ENCODE measurements at regions of chr1 and their contacts with region 1.

Region 1: GRCh38 chr1:113677250-113678158 is 81.8 kb downstream of the PHTF1 start:
- DNase-seq: peak in 2 of 9 experiments; percentile 44 to 59
- ATAC-seq: peak; percentile 57
- H3K4me3 ChIP-seq: no peak overlapping the region
- H3K4me3 Mint-ChIP-seq: no peak overlapping the region
- H3K27ac ChIP-seq: no peak overlapping the region
- H3K27ac Mint-ChIP-seq: no peak overlapping the region
- H3K4me1 ChIP-seq: no peaks in the 10 kb centered on the region
- H3K4me1 Mint-ChIP-seq: no peaks in the 10 kb centered on the region
- H3K27me3 ChIP-seq: no peaks in the 10 kb centered on the region
- H3K27me3 Mint-ChIP-seq: no peaks in the 10 kb centered on the region
- CTCF ChIP-seq: peak; percentile 70

Region 2: GRCh38 chr1:112803906-112804762 is 873.4 kb before region 1 on chr1:
- CTCF ChIA-PET with region 1: no interaction called
- POLR2A ChIA-PET with region 1: no interaction called
- intact Hi-C with region 1: loop called in 1 of 2 experiments (anchors 10 kb)
- DNase-seq: peak in 7 of 9 experiments; percentile 13 to 60 (median 29)
- ATAC-seq: peak; percentile 56
- H3K4me3 ChIP-seq: no peak overlapping the region
- H3K4me3 Mint-ChIP-seq: no peak overlapping the region
- H3K27ac ChIP-seq: no peak overlapping the region
- H3K27ac Mint-ChIP-seq: no peak overlapping the region
- H3K4me1 ChIP-seq: no peaks in the 10 kb centered on the region
- H3K4me1 Mint-ChIP-seq: no peaks in the 10 kb centered on the region
- H3K27me3 ChIP-seq: no peaks in the 10 kb centered on the region
- H3K27me3 Mint-ChIP-seq: peaks cover 9% of the 10 kb centered on the region
- CTCF ChIP-seq: no peak

Region 3: GRCh38 chr1:112882271-112882744 is 795.2 kb before region 1 on chr1:
- CTCF ChIA-PET with region 1: interaction called, 4 read pairs
- POLR2A ChIA-PET with region 1: no interaction called
- intact Hi-C with region 1: loop called (anchors 2 kb)
- DNase-seq: no peak
- ATAC-seq: no peak
- H3K4me3 ChIP-seq: no peak overlapping the region
- H3K4me3 Mint-ChIP-seq: no peak overlapping the region
- H3K27ac ChIP-seq: no peak overlapping the region
- H3K27ac Mint-ChIP-seq: peak overlapping the region; percentile 37
- H3K4me1 ChIP-seq: no peaks in the 10 kb centered on the region
- H3K4me1 Mint-ChIP-seq: no peaks in the 10 kb centered on the region
- H3K27me3 ChIP-seq: no peaks in the 10 kb centered on the region
- H3K27me3 Mint-ChIP-seq: peaks cover 3% of the 10 kb centered on the region
- CTCF ChIP-seq: no peak

Region 4: GRCh38 chr1:113140588-113141446 is 536.7 kb before region 1 on chr1:
- CTCF ChIA-PET with region 1: interaction called, 8 read pairs
- POLR2A ChIA-PET with region 1: no interaction called
- intact Hi-C with region 1: loop called in 1 of 2 experiments (anchors 1 kb)
- DNase-seq: peak; percentile 2 to 67 (median 43)
- ATAC-seq: peak; percentile 73
- H3K4me3 ChIP-seq: no peak overlapping the region
- H3K4me3 Mint-ChIP-seq: no peak overlapping the region
- H3K27ac ChIP-seq: no peak overlapping the region
- H3K27ac Mint-ChIP-seq: no peak overlapping the region
- H3K4me1 ChIP-seq: no peaks in the 10 kb centered on the region
- H3K4me1 Mint-ChIP-seq: peaks cover 8% of the 10 kb centered on the region
- H3K27me3 ChIP-seq: no peaks in the 10 kb centered on the region
- H3K27me3 Mint-ChIP-seq: no peaks in the 10 kb centered on the region
- CTCF ChIP-seq: peak; percentile 70

Region 5: DNA sequence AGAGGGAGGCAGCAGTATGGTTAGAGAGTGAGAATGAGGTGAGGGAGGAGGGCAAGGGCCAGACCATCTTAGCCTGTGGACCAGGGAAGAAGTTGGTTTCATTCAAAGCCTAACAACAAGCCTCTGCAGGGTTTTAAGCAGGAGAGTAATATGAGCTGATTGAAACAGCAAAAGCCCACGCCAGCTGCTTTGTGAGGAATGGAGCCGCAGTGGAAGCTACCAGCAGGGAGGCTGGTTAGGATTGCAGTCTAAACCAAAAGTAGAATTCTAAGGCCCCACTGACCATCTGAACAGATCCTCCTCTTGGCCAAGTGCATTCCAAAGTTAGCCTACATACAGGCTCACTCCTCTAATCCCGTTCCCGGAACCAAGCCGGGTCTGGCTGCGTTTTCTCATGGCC is 346.5 kb after region 1 on chr1:
- CTCF ChIA-PET with region 1: no interaction called
- POLR2A ChIA-PET with region 1: no interaction called
- intact Hi-C with region 1: no loop called
- DNase-seq: no peak
- ATAC-seq: no peak
- H3K4me3 ChIP-seq: no peak overlapping the region
- H3K4me3 Mint-ChIP-seq: no peak overlapping the region
- H3K27ac ChIP-seq: no peak overlapping the region
- H3K27ac Mint-ChIP-seq: no peak overlapping the region
- H3K4me1 ChIP-seq: no peaks in the 10 kb centered on the region
- H3K4me1 Mint-ChIP-seq: no peaks in the 10 kb centered on the region
- H3K27me3 ChIP-seq: no peaks in the 10 kb centered on the region
- H3K27me3 Mint-ChIP-seq: peaks cover 7% of the 10 kb centered on the region
- CTCF ChIP-seq: no peak

Measured in CD8-positive, alpha-beta T cell (primary cell).